MCF 10A (cell line): ENCODE measurements at regions of chr20 and their contacts with region 1.

Region 1: DNA sequence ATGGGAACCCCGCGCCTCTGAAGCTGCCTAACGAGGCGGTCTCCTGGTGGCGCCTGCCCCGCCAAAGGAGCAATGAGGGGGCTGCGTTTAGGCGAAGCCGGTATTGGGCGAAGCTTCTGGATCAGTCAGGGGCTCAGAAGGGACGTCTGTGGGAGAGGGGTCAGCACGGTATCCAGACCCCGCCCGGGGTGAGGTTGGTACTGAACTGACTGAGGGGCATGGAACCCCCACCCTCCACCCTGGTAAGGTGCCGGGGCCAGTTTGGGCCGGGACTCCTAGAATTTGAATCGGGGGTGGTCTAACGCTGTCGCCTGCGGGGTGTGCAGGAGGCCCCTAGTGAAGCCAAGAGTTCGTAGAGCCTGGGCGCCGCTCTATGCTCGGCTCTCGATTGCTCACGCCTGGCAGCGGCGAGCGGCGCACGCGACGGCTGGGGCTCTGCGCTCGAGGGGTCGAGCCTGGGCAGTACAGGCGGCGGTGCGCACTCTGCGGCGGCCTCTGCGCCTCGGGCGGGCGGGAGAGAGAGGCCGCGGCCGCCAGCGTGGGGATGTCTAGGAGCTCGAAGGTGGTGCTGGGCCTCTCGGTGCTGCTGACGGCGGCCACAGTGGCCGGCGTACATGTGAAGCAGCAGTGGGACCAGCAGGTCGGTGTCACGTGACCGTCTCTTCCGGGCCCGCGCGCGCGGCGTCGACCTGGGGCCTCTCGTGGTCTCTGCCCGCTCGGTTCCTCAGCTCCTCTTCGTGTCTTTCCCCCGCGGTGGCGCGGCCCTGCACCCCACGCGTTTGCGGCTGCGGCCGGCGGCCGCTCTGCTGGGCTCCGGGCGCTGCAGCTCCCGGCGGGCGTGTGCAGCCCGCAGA is at the starts of genes KAT14 and PET117:
- DNase-seq: peak; percentile 87
- H3K4me3 Mint-ChIP-seq: peak within 1 kb of the TSS; percentile 81
- H3K27ac Mint-ChIP-seq: peak within 1 kb of the TSS; percentile 21
- H3K4me1 Mint-ChIP-seq: peaks cover 24% of the 10 kb centered on the region
- H3K27me3 Mint-ChIP-seq: no peaks in the 10 kb centered on the region
- CTCF ChIP-seq: no peak
- total RNA-seq, gene KAT14: 15.5 and 16.4 TPM in 2 replicates
- total RNA-seq, gene PET117: 11.9 and 14.8 TPM in 2 replicates

Region 2: GRCh38 chr20:18056174-18057100 is 81.2 kb before region 1 on chr20:
- CTCF ChIA-PET with region 1: interaction called, 3 read pairs
- POLR2A ChIA-PET with region 1: interaction called, 19 read pairs
- intact Hi-C with region 1: no loop called
- DNase-seq: peak; percentile 21
- H3K4me3 Mint-ChIP-seq: peak overlapping the region; percentile 71
- H3K27ac Mint-ChIP-seq: no peak overlapping the region
- H3K4me1 Mint-ChIP-seq: peaks cover 20% of the 10 kb centered on the region
- H3K27me3 Mint-ChIP-seq: peaks cover 29% of the 10 kb centered on the region
- CTCF ChIP-seq: no peak

Region 3: DNA sequence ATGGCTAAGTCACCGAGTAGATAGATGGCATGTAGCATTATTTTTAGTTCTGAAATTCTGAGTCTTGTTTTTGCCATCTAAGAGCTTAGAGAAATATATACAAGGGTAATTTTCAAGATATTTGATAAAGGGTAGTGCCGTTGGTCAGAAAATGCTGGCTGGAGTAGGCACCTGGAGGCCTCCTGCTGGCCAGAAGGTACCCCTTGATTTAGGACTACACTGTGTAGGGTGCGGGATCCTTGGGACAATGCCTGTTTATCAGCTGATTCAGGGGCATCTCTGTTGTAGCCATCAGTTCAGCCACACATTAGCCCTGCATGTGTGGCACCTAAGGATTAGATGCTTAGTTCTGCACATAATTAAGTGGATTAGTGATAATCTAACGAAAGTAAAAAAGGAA is 12.6 kb after region 1 on chr20:
- CTCF ChIA-PET with region 1: interaction called, 5 read pairs
- POLR2A ChIA-PET with region 1: interaction called, 12 read pairs
- intact Hi-C with region 1: no loop called
- DNase-seq: no peak
- H3K4me3 Mint-ChIP-seq: no peak overlapping the region
- H3K27ac Mint-ChIP-seq: no peak overlapping the region
- H3K4me1 Mint-ChIP-seq: no peaks in the 10 kb centered on the region
- H3K27me3 Mint-ChIP-seq: no peaks in the 10 kb centered on the region
- CTCF ChIP-seq: no peak

Region 4: DNA sequence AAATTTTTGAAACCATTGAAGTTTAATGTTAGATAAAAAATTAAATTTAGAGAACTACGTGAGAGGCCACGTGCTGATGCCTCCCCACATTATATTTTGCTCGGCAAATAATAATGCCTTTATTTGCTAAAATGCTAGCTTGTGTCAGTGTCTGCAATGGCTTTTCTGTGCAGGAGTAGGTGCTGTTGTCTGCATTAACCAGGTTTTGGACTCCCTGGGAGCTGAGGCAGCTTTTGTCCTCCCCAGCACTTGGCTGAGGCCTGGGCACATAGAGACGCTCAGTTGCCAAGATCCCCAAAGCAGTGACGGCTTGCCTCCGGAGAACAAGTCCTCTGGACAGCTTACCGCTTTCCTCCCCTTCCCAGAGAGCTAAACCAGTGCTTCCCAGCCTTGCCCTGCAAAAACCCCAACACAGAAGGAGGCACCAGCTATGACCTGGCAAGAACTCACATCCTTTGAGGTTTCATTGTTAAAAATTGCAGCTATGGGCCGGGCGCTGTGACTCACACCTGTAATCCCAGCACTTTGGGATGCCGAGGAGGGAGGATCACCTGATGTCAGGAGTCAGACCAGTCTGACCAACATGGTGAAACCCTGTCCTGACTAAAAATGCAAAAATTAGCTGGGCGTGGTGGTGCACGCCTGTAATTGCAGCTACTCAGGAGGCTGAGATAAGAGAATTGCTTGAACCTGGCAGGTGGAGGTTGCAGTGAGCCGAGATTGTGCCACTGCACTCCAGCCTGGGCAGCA is 59.9 kb after region 1 on chr20:
- CTCF ChIA-PET with region 1: interaction called, 3 read pairs
- POLR2A ChIA-PET with region 1: interaction called, 12 read pairs
- intact Hi-C with region 1: no loop called
- DNase-seq: peak; percentile 87
- H3K4me3 Mint-ChIP-seq: no peak overlapping the region
- H3K27ac Mint-ChIP-seq: peak overlapping the region; percentile 89
- H3K4me1 Mint-ChIP-seq: no peaks in the 10 kb centered on the region
- H3K27me3 Mint-ChIP-seq: no peaks in the 10 kb centered on the region
- CTCF ChIP-seq: peak; percentile 18

Region 5: GRCh38 chr20:18224968-18225568 is 87.4 kb after region 1 on chr20:
- CTCF ChIA-PET with region 1: no interaction called
- POLR2A ChIA-PET with region 1: interaction called, 14 read pairs
- intact Hi-C with region 1: no loop called
- DNase-seq: peak; percentile 91
- H3K4me3 Mint-ChIP-seq: peak overlapping the region; percentile 63
- H3K27ac Mint-ChIP-seq: peak overlapping the region; percentile 92
- H3K4me1 Mint-ChIP-seq: peaks cover 21% of the 10 kb centered on the region
- H3K27me3 Mint-ChIP-seq: no peaks in the 10 kb centered on the region
- CTCF ChIP-seq: no peak

Region 6: GRCh38 chr20:18252597-18253451 is 115.2 kb after region 1 on chr20:
- CTCF ChIA-PET with region 1: interaction called, 4 read pairs
- POLR2A ChIA-PET with region 1: interaction called, 13 read pairs
- intact Hi-C with region 1: loop called (anchors 1 kb)
- DNase-seq: peak; percentile 91
- H3K4me3 Mint-ChIP-seq: peak overlapping the region; percentile 52
- H3K27ac Mint-ChIP-seq: peak overlapping the region; percentile 100
- H3K4me1 Mint-ChIP-seq: peaks cover 30% of the 10 kb centered on the region
- H3K27me3 Mint-ChIP-seq: no peaks in the 10 kb centered on the region
- CTCF ChIP-seq: no peak